Stomach (tissue), 19 donors: ENCODE measurements at regions of chr6 and their contacts with region 1.

Region 1: GRCh38 chr6:90296346-90297114 is at the start of gene BACH2:
- DNase-seq: peak; percentile 95 to 98
- H3K4me3 ChIP-seq: peak within 1 kb of the TSS; percentile 66 to 88 (median 80)
- H3K27ac ChIP-seq: peak within 1 kb of the TSS; percentile 69 to 88 (median 83)
- H3K4me1 ChIP-seq: peaks cover 9 to 22% (median 21%) of the 10 kb centered on the region in 4 donors
- H3K27me3 ChIP-seq: peaks cover 0 to 43% (median 17%) of the 10 kb centered on the region in 3 donors
- CTCF ChIP-seq: peak in 1 of 7 experiments; percentile 42
- EP300 ChIP-seq: no peak
- POLR2A ChIP-seq: no peak
- total RNA-seq, gene BACH2: 1.4 to 10.8 (median 3.2) TPM in 4 of 5 donors, not detected in the other

Region 2: DNA sequence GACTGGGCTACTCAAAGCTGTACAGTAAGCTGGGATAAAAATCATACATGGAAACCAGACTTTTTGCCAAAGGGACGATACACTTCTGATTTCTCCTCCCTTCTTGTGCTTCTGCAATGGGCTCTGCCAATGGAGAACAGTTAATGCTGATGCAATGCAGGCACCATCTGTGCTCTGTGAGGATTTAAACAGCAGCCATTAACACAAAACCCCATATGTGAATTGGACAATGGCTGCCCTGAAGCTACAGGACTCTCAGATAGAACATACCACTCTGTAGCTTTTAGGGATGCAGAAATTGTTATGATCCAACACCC is 330.3 kb before region 1 on chr6:
- intact Hi-C with region 1: loop called (anchors 10 kb)
- DNase-seq: peak in 1 of 2 donors; percentile 32
- H3K4me3 ChIP-seq: no peak overlapping the region
- H3K27ac ChIP-seq: no peak overlapping the region
- H3K4me1 ChIP-seq: peaks cover 0 to 9% (median 0%) of the 10 kb centered on the region in 4 donors
- H3K27me3 ChIP-seq: no peaks in the 10 kb centered on the region
- CTCF ChIP-seq: no peak
- EP300 ChIP-seq: no peak
- POLR2A ChIP-seq: no peak

Region 3: GRCh38 chr6:90222724-90223198 is 73.8 kb before region 1 on chr6:
- intact Hi-C with region 1: loop called (anchors 10 kb)
- DNase-seq: no peak
- H3K4me3 ChIP-seq: no peak overlapping the region
- H3K27ac ChIP-seq: no peak overlapping the region
- H3K4me1 ChIP-seq: peaks cover 7 to 31% (median 17%) of the 10 kb centered on the region in 4 donors
- H3K27me3 ChIP-seq: no peaks in the 10 kb centered on the region
- CTCF ChIP-seq: no peak
- EP300 ChIP-seq: no peak
- POLR2A ChIP-seq: no peak

Region 4: DNA sequence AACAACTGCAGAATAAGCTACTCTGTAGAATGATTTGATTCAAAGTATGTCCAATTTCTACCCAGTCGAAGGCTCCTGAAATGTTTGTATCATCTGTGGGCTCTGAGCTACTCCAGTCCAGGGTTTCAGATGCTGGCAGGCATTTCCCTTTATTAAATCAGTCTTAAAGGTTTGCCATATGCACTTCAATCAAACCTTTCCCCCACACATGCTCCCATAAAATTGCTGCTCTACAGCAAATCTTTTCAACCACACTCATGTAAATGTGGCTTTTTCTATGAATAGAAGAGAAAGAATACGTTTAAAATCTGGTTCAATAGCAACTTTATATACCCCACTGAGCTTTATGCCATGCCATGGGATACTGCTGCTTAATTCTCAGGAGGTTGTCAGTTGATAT is 532.8 kb after region 1 on chr6:
- intact Hi-C with region 1: no loop called
- DNase-seq: no peak
- H3K4me3 ChIP-seq: no peak overlapping the region
- H3K27ac ChIP-seq: no peak overlapping the region
- H3K4me1 ChIP-seq: no peaks in the 10 kb centered on the region
- H3K27me3 ChIP-seq: no peaks in the 10 kb centered on the region
- CTCF ChIP-seq: no peak
- EP300 ChIP-seq: no peak
- POLR2A ChIP-seq: no peak